ENCODE measurements at regions of chr14 and their contacts with region 1.

Region 1: DNA sequence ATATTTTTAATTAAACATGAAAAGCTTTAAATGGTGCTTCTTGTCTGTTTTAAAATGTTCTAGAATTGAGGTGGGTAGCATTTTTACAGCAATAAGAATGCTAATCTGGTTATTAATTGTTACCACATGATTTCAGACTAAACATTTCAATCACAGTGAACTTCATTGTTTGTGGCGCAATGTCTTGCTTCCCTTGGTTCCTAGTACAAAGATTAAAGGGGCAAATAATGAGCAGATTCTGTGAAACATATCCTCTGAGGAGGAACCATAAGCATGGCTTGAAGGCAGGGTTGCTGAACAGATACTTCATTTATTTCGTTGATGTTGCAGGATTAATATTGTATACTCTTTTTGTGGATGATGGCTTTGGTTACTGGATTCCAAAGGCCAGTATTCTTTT is 162.1 kb downstream of the FUT8 start:
- DNase-seq: no peak
- H3K4me3 ChIP-seq: no peak overlapping the region
- H3K27ac ChIP-seq: no peak overlapping the region
- H3K4me1 ChIP-seq: no peaks in the 10 kb centered on the region
- H3K27me3 ChIP-seq: no peaks in the 10 kb centered on the region
- CTCF ChIP-seq: no peak

Region 2: GRCh38 chr14:65720171-65720570 is 145.6 kb after region 1 on chr14:
- CTCF ChIA-PET with region 1: interaction called, 13 read pairs
- dilution Hi-C with region 1: no loop called
- in situ Hi-C with region 1: no loop called
- intact Hi-C with region 1: no loop called
- DNase-seq: no peak
- H3K4me3 ChIP-seq: no peak overlapping the region
- H3K27ac ChIP-seq: no peak overlapping the region
- H3K4me1 ChIP-seq: no peaks in the 10 kb centered on the region
- H3K27me3 ChIP-seq: no peaks in the 10 kb centered on the region
- CTCF ChIP-seq: no peak

Measured in mammary epithelial cell (primary cell).